Ascending aorta (tissue), 2 donors: ENCODE measurements at regions of chr14 and their contacts with region 1.

Region 1: GRCh38 chr14:73785873-73786695 is 65.5 kb upstream of the PTGR2 start:
- DNase-seq: peak; percentile 43 to 93
- H3K4me3 ChIP-seq: peak overlapping the region; percentile 87 to 89
- H3K27ac ChIP-seq: peak overlapping the region; percentile 98
- H3K4me1 ChIP-seq: peaks cover 37 to 64% of the 10 kb centered on the region in 2 donors
- H3K27me3 ChIP-seq: no peaks in the 10 kb centered on the region
- CTCF ChIP-seq: peak in 2 of 3 experiments; percentile 12 to 49

Region 2: GRCh38 chr14:73753959-73754882 is 31.9 kb before region 1 on chr14:
- intact Hi-C with region 1: loop called (anchors 5 kb)
- DNase-seq: no peak
- H3K4me3 ChIP-seq: peak overlapping the region; percentile 24 to 50
- H3K27ac ChIP-seq: peak overlapping the region; percentile 98 to 99
- H3K4me1 ChIP-seq: peaks cover 60 to 98% of the 10 kb centered on the region in 2 donors
- H3K27me3 ChIP-seq: no peaks in the 10 kb centered on the region
- CTCF ChIP-seq: no peak

Region 3: GRCh38 chr14:73759714-73760597 is 26.1 kb before region 1 on chr14:
- intact Hi-C with region 1: loop called (anchors 1 kb)
- DNase-seq: peak; percentile 96 to 99
- H3K4me3 ChIP-seq: peak overlapping the region; percentile 83 to 92
- H3K27ac ChIP-seq: peak overlapping the region; percentile 98 to 99
- H3K4me1 ChIP-seq: peaks cover 34 to 82% of the 10 kb centered on the region in 2 donors
- H3K27me3 ChIP-seq: no peaks in the 10 kb centered on the region
- CTCF ChIP-seq: peak in 1 of 3 experiments; percentile 58

Region 4: DNA sequence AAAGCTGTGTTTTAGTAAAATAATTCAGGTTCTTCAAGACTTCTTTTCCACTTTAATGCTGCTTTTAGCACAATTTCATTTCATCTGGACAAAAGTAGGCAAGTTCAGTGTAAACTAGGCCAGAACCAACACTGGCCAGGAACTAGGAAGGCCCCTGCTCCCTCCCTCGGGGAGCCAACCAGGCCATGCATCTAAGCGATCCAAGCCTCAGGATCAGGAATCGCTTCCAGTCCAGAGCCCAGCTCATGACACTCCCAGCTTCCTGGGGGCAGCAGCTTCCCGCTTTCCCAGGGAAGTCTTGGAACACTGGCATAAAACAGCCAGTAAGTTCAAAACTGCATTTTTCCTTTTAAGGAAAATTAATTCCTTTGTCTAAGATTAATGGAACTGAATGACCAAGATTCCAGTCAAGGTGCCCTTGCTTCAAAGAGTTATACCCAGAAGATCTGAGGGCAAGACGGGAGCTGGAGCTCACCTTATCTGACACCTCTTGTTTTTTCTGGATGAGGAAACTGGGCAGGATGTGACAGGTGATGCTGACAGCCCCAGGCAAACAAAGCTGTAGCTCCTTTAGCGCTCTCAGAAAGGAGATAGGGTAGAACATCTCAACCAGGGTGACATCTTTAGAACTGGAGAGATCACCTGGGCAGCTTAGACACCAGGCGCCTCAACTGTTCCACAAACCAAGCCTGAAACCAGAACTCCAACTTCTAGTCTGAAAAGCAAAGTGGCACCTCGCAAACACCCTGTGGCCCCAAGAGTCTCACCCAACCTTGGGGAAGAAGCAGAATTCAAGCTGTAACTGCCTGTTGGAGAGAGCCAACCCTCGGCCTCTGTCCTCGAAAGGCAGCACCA is 10.5 kb before region 1 on chr14:
- intact Hi-C with region 1: loop called (anchors 1 kb)
- DNase-seq: no peak
- H3K4me3 ChIP-seq: no peak overlapping the region
- H3K27ac ChIP-seq: peak overlapping the region; percentile 69 to 71
- H3K4me1 ChIP-seq: peaks cover 17 to 47% of the 10 kb centered on the region in 2 donors
- H3K27me3 ChIP-seq: no peaks in the 10 kb centered on the region
- CTCF ChIP-seq: no peak

Region 5: GRCh38 chr14:73825551-73826188 is 39.6 kb after region 1 on chr14:
- intact Hi-C with region 1: loop called (anchors 5 kb)
- DNase-seq: peak; percentile 43 to 95
- H3K4me3 ChIP-seq: no peak overlapping the region
- H3K27ac ChIP-seq: no peak overlapping the region
- H3K4me1 ChIP-seq: peaks cover 0 to 4% of the 10 kb centered on the region in 2 donors
- H3K27me3 ChIP-seq: no peaks in the 10 kb centered on the region
- CTCF ChIP-seq: peak; percentile 84 to 94 (median 89)

Region 6: DNA sequence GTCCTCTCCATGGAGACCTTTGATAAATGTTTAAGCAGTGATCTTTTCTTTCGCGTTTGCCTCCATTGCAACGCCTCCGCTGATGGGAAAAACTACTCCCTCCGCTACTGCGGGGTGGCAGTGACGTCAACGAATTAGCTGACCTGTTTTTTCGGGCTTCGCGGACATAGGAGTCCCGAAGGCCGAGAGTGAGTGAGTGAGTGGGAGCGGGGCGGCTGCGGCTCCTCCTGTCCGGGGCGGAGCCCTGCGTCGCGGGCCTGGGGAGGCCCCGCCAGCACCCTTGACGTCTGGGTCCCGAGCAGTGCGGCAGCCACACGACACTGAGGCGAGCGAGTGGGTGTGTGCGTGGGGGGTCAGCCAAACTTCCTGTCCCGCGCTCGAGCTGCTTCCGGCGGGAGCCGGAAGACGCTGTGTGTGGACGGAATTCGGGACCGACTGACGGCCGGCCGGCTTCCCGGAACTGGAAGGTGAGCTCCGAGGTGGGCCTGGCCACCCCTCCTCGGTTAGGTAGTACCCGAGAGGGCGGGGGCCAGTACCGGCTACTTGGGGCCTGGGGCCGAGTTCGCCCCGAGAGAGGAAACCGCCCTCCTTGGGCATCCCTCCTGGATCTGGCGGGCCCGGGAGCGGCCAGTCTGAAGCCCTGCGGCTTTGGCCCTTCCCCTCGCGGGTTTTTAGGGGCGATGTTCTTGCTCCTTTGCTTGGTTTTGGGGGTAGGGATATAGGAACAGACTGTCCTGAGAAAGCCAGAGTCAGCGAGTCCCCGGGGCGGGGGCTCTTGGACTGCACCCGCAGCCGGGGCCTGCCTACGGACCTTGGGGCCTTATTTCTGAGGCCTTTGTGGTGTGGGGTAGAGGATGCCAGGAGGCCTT is 100.6 kb after region 1 on chr14 and contains the start of gene ZNF410:
- intact Hi-C with region 1: loop called (anchors 5 kb)
- DNase-seq: peak; percentile 82 to 98
- H3K4me3 ChIP-seq: peak within 1 kb of the TSS; percentile 80 to 95
- H3K27ac ChIP-seq: peak within 1 kb of the TSS; percentile 96
- H3K4me1 ChIP-seq: peaks cover 10 to 13% of the 10 kb centered on the region in 2 donors
- H3K27me3 ChIP-seq: no peaks in the 10 kb centered on the region
- CTCF ChIP-seq: no peak
- total RNA-seq, gene ZNF410: 33.6 TPM

Region 7: GRCh38 chr14:73943083-73943482 is 157.0 kb after region 1 on chr14:
- intact Hi-C with region 1: no loop called
- DNase-seq: no peak
- H3K4me3 ChIP-seq: no peak overlapping the region
- H3K27ac ChIP-seq: peak overlapping the region in 1 of 2 donors; percentile 34
- H3K4me1 ChIP-seq: no peaks in the 10 kb centered on the region
- H3K27me3 ChIP-seq: no peaks in the 10 kb centered on the region
- CTCF ChIP-seq: no peak